ENCODE measurements at regions of chr11 and their contacts with region 1.

Region 1: DNA sequence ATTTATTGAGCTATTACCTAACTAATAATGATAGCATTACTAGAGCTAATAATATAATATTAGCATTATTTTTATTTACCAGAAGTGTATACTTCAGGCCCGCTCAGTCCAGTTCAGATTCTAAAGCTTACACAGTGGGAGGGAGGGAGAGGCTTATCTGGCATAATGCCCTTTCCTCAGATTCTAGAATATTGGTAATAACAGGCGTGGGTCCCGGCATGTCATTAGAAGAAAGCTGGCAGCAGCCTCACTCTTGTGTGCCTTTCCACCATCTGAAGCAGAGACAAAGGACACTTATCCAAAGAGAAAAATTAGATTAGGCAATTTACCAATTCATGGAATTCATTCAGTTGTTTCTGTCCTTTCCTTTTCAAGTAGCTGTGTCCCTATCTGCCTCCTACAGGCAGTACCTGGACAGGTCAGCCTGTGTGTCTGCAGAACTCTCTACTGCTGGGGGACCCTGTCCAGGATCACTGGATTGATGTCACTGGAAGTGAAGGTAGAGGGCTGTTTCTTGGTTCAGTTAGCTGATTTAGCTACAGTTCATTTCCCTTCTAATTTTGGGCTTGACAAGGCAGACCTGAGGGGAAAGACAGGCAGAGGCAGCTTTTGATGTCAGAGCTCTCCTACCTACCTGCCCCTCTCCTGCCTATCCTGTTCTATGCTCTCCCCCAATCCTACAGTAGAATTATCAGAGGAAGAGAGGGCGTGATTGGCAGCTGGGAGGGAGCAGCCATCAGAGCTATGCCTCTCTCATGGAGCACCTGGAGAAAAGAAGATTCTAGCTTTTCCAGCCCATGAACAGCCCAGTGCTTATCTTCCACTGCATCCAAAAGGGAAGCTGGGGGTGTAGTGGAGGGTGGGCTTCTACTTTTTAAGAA is 20.3 kb upstream of the CCDC90B start:
- DNase-seq: no peak
- ATAC-seq: peak; percentile 38; the same call in 1 of the 3 replicates
- H3K4me3 ChIP-seq: no peak overlapping the region
- H3K27ac ChIP-seq: no peak overlapping the region
- H3K4me1 ChIP-seq: no peaks in the 10 kb centered on the region
- H3K27me3 ChIP-seq: no peaks in the 10 kb centered on the region
- CTCF ChIP-seq: no peak
- EP300 ChIP-seq: no peak
- POLR2A ChIP-seq: no peak
- RAD21 ChIP-seq: no peak

Region 2: DNA sequence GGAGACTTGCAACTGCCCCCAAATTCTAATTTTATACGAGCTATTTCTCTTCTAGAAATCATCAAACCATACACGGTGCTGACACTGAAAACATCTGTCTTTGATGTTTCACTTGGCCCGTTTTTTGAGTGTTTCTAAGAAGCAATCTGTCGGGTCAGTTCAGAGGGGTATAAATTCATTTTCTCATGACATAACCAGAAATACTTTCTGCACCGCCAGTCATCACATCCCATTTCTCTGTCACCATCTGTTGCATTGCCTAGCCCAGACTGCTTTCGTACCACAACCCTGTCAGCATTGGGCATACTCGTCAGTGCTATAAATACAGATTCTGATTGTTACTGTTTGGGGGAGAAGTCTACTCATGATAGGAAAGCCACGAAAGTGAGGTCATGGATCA is 42.9 kb after region 1 on chr11:
- CTCF ChIA-PET with region 1: no interaction called
- POLR2A ChIA-PET with region 1: no interaction called
- RAD21 ChIA-PET with region 1: no interaction called
- SMC1A ChIA-PET with region 1: no interaction called
- in situ Hi-C with region 1: no loop called
- intact Hi-C with region 1: loop called (anchors 5 kb)
- DNase-seq: no peak
- ATAC-seq: no peak
- H3K4me3 ChIP-seq: no peak overlapping the region
- H3K27ac ChIP-seq: no peak overlapping the region
- H3K4me1 ChIP-seq: no peaks in the 10 kb centered on the region
- H3K27me3 ChIP-seq: no peaks in the 10 kb centered on the region; a peak in 1 of 4 replicates
- CTCF ChIP-seq: no peak
- EP300 ChIP-seq: no peak
- POLR2A ChIP-seq: no peak
- RAD21 ChIP-seq: no peak

Region 3: GRCh38 chr11:83364500-83365059 is 58.1 kb after region 1 on chr11:
- CTCF ChIA-PET with region 1: no interaction called
- POLR2A ChIA-PET with region 1: no interaction called
- RAD21 ChIA-PET with region 1: no interaction called
- SMC1A ChIA-PET with region 1: no interaction called
- in situ Hi-C with region 1: no loop called
- intact Hi-C with region 1: loop called (anchors 5 kb)
- DNase-seq: no peak
- ATAC-seq: no peak
- H3K4me3 ChIP-seq: no peak overlapping the region
- H3K27ac ChIP-seq: no peak overlapping the region
- H3K4me1 ChIP-seq: no peaks in the 10 kb centered on the region
- H3K27me3 ChIP-seq: no peaks in the 10 kb centered on the region
- CTCF ChIP-seq: no peak
- EP300 ChIP-seq: no peak
- POLR2A ChIP-seq: no peak
- RAD21 ChIP-seq: no peak